A673 (cell line): ENCODE measurements at regions of chr3 and their contacts with region 1.

Region 1: GRCh38 chr3:182713743-182714517 is 79.4 kb upstream of the ATP11B start:
- DNase-seq: peak; percentile 80
- H3K4me3 ChIP-seq: no peak overlapping the region
- H3K27ac ChIP-seq: no peak overlapping the region
- H3K4me1 ChIP-seq: no peaks in the 10 kb centered on the region
- H3K27me3 ChIP-seq: no peaks in the 10 kb centered on the region
- CTCF ChIP-seq: peak; percentile 64

Region 2: GRCh38 chr3:182258538-182259177 is 455.3 kb before region 1 on chr3:
- CTCF ChIA-PET with region 1: no interaction called
- POLR2A ChIA-PET with region 1: no interaction called
- intact Hi-C with region 1: no loop called
- DNase-seq: peak; percentile 78
- H3K4me3 ChIP-seq: no peak overlapping the region
- H3K27ac ChIP-seq: no peak overlapping the region
- H3K4me1 ChIP-seq: peaks cover 7% of the 10 kb centered on the region
- H3K27me3 ChIP-seq: no peaks in the 10 kb centered on the region
- CTCF ChIP-seq: peak; percentile 77

Region 3: GRCh38 chr3:182698078-182698477 is 15.9 kb before region 1 on chr3:
- CTCF ChIA-PET with region 1: no interaction called
- POLR2A ChIA-PET with region 1: interaction called, 11 read pairs
- intact Hi-C with region 1: no loop called
- DNase-seq: no peak
- H3K4me3 ChIP-seq: no peak overlapping the region
- H3K27ac ChIP-seq: no peak overlapping the region
- H3K4me1 ChIP-seq: peaks cover 13% of the 10 kb centered on the region
- H3K27me3 ChIP-seq: peaks cover 59% of the 10 kb centered on the region
- CTCF ChIP-seq: no peak

Region 4: DNA sequence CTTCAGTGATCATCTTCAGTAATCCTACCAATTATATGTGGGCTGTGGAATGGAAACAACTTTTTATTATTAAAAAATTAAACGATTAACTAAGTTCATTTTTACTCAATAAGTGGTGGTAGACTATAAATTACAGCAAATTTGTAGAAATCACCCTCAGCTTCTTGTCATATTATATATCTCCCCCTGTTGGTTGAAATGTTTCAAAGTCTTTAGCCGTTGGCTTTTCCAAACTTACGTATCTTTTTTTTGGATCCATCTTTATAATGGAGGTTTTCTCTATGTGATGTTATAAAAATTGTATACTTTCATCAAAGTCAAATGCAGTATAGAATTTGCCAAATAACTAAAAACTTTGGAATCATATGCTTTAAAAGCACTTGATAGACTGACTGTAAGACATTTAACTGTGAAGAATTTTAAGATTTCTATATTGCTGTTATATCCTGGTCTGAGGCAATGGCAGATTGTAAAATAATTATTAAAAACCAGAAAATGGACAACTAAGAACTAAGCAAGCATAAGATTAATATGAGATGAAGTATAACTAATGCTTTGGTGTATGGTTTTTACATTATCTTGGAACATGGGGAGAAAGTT is 124.0 kb after region 1 on chr3:
- CTCF ChIA-PET with region 1: interaction called, 5 read pairs
- POLR2A ChIA-PET with region 1: no interaction called
- intact Hi-C with region 1: loop called (anchors 2 kb)
- DNase-seq: peak; percentile 39
- H3K4me3 ChIP-seq: no peak overlapping the region
- H3K27ac ChIP-seq: no peak overlapping the region
- H3K4me1 ChIP-seq: no peaks in the 10 kb centered on the region
- H3K27me3 ChIP-seq: no peaks in the 10 kb centered on the region
- CTCF ChIP-seq: peak; percentile 61

Region 5: GRCh38 chr3:182909318-182910040 is 195.5 kb after region 1 on chr3:
- CTCF ChIA-PET with region 1: no interaction called
- POLR2A ChIA-PET with region 1: no interaction called
- intact Hi-C with region 1: loop called (anchors 10 kb)
- DNase-seq: peak; percentile 32
- H3K4me3 ChIP-seq: no peak overlapping the region
- H3K27ac ChIP-seq: no peak overlapping the region
- H3K4me1 ChIP-seq: no peaks in the 10 kb centered on the region
- H3K27me3 ChIP-seq: no peaks in the 10 kb centered on the region
- CTCF ChIP-seq: peak; percentile 61

Region 6: DNA sequence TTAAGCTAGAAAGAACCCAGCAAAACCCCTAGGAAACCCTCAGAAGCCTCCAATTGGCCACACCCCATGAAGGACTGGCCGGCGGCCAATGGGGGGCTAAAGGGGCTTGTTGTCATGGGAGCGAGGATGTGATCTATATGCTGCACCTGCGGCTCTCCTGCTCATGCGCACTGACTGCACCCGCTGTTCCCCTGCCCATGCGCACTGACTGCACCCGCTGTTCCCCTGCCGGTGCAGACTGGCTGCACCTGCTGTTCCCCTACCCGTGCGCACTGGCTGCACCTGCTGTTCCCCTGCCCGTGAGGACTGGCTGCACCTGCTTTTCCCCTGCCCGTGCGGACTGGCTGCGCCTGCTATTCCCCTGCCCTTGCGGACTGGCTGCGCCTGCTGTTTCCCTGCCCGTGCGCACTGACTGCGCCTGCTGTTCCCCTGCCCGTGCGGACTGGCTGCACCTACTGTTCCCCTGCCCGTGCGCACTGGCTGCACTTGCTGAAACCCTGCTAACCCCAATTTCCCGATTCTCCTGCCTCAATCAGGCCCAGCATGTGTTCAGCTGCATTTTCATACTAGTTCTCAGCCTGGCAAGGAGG is 402.2 kb after region 1 on chr3:
- CTCF ChIA-PET with region 1: interaction called, 3 read pairs
- POLR2A ChIA-PET with region 1: no interaction called
- intact Hi-C with region 1: loop called (anchors 5 kb)
- DNase-seq: peak; percentile 69
- H3K4me3 ChIP-seq: peak overlapping the region; percentile 44
- H3K27ac ChIP-seq: no peak overlapping the region
- H3K4me1 ChIP-seq: no peaks in the 10 kb centered on the region
- H3K27me3 ChIP-seq: peaks cover 11% of the 10 kb centered on the region
- CTCF ChIP-seq: no peak

Region 7: GRCh38 chr3:183188895-183189462 is 475.0 kb after region 1 on chr3:
- CTCF ChIA-PET with region 1: no interaction called
- POLR2A ChIA-PET with region 1: no interaction called
- intact Hi-C with region 1: loop called (anchors 10 kb)
- DNase-seq: peak; percentile 45
- H3K4me3 ChIP-seq: no peak overlapping the region
- H3K27ac ChIP-seq: no peak overlapping the region
- H3K4me1 ChIP-seq: peaks cover 6% of the 10 kb centered on the region
- H3K27me3 ChIP-seq: no peaks in the 10 kb centered on the region
- CTCF ChIP-seq: peak; percentile 52

Region 8: GRCh38 chr3:183385698-183386613 is 672.0 kb after region 1 on chr3:
- CTCF ChIA-PET with region 1: interaction called, 4 read pairs
- POLR2A ChIA-PET with region 1: no interaction called
- intact Hi-C with region 1: loop called (anchors 5 kb)
- DNase-seq: peak; percentile 75
- H3K4me3 ChIP-seq: no peak overlapping the region
- H3K27ac ChIP-seq: no peak overlapping the region
- H3K4me1 ChIP-seq: no peaks in the 10 kb centered on the region
- H3K27me3 ChIP-seq: no peaks in the 10 kb centered on the region
- CTCF ChIP-seq: peak; percentile 76